ENCODE measurements at regions of chr2 and their contacts with region 1.

Region 1: DNA sequence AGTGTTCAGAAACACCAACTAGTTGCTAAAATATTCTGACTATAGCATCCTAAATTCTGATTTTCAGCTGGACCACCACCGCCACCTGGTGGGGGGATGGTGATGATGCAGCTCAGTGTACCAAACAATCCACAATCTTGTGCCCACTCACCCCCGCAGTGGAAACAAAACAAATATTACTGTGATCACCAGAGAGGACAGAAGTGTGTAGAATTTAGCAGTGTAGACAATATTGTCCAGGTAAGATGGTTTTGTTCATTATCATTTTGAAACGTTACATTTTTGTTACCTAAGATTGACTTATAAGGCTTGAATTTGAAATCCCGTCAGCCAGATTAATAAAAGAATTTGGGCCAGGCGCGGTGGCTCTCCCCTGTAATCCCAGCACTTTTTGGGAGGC is 31.7 kb upstream of the UBXN4 start:
- DNase-seq: peak; percentile 54 to 75
- H3K4me3 ChIP-seq: no peak overlapping the region
- H3K4me3 Mint-ChIP-seq: no peak overlapping the region
- H3K27ac Mint-ChIP-seq: no peak overlapping the region
- H3K4me1 ChIP-seq: no peaks in the 10 kb centered on the region
- H3K4me1 Mint-ChIP-seq: no peaks in the 10 kb centered on the region
- H3K27me3 ChIP-seq: no peaks in the 10 kb centered on the region
- H3K27me3 Mint-ChIP-seq: no peaks in the 10 kb centered on the region
- CTCF ChIP-seq: peak; percentile 94 to 96

Region 2: DNA sequence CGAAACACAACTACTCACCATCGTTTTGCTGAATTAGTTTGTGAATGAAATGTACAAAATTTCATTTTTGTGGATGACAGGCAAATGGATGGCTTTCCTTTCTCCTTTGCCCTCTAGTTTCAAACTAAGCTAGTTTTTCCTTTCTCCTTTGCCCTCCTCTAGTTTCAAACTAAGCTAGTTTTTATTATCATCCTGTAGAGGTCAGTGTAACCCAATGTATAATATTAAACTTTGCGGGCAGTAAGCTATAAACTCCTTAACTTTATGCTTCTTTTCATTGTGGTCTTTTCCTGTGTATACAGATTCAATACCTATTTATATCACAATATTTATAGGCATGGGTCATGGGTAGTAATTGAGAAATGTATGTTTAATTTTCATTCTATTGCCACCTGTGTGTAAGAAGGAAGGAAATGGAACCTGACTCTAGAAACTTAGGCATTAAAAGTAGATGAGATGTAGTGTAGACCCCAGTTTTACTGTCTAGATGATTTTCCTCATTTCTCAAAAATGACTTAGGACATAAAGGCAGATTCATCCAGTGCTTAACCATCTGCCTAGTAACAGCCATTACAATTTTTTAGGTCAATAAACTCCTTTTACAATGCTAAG is 720.9 kb before region 1 on chr2:
- CTCF ChIA-PET with region 1: interaction called, 18 read pairs
- POLR2A ChIA-PET with region 1: no interaction called
- intact Hi-C with region 1: loop called (anchors 1 kb)
- DNase-seq: peak in 1 of 2 experiments; percentile 7
- H3K4me3 ChIP-seq: no peak overlapping the region
- H3K4me3 Mint-ChIP-seq: no peak overlapping the region
- H3K27ac Mint-ChIP-seq: no peak overlapping the region
- H3K4me1 ChIP-seq: no peaks in the 10 kb centered on the region
- H3K4me1 Mint-ChIP-seq: no peaks in the 10 kb centered on the region
- H3K27me3 ChIP-seq: no peaks in the 10 kb centered on the region
- H3K27me3 Mint-ChIP-seq: peaks cover 16% of the 10 kb centered on the region
- CTCF ChIP-seq: peak; percentile 40 to 53

Region 3: DNA sequence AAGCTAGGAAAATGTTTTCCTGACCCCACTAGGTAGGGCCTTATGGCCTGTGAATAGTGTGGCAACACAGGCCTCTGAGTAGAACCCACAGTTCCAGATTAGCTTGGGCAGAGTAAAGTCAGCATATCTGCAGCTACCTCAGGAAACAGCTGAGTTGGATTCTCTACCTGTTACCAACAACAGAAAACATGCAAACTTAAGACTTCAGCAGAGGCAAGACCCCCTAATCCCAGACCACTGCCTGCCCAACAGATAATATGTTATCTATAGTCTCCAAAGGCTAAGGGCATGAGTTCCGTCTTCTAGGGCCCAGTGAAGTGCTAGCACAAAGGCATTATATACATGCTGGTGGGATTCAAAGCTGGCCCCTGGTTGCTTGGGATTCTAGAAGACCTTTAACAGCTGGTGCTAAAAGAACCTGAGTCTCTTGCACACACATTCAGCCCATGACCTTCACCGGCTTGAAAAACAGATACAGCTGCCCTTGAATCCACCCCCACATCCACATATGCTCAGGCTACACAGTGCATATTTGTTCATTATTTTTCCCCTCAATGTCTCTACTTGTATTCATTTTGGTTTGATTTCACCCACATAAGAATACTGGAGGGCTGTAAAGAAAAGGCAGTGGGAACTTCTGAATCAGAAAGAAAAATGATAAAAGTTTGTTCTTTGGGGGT is 18.2 kb after region 1 on chr2:
- CTCF ChIA-PET with region 1: no interaction called
- POLR2A ChIA-PET with region 1: no interaction called
- intact Hi-C with region 1: no loop called
- DNase-seq: no peak
- H3K4me3 ChIP-seq: no peak overlapping the region
- H3K4me3 Mint-ChIP-seq: no peak overlapping the region
- H3K27ac Mint-ChIP-seq: no peak overlapping the region
- H3K4me1 ChIP-seq: no peaks in the 10 kb centered on the region
- H3K4me1 Mint-ChIP-seq: no peaks in the 10 kb centered on the region
- H3K27me3 ChIP-seq: no peaks in the 10 kb centered on the region
- H3K27me3 Mint-ChIP-seq: no peaks in the 10 kb centered on the region
- CTCF ChIP-seq: no peak

Measured in Caco-2 (cell line).